Gastrocnemius medialis (tissue), 4 donors: ENCODE measurements at regions of chr20 and their contacts with region 1.

Region 1: GRCh38 chr20:57654363-57654997 is 34.3 kb upstream of the ZBP1 start:
- DNase-seq: no peak
- ATAC-seq: peak; percentile 59 to 82
- H3K4me3 ChIP-seq: no peak overlapping the region
- H3K27ac ChIP-seq: no peak overlapping the region
- H3K4me1 ChIP-seq: no peaks in the 10 kb centered on the region
- H3K27me3 ChIP-seq: no peaks in the 10 kb centered on the region
- CTCF ChIP-seq: peak; percentile 88 to 94 (median 91)
- POLR2A ChIP-seq: no peak

Region 2: GRCh38 chr20:57748601-57749130 is 94.2 kb after region 1 on chr20:
- in situ Hi-C with region 1: loop called in 1 of 4 experiments (anchors 10 kb)
- intact Hi-C with region 1: loop called (anchors 5 kb)
- DNase-seq: peak; percentile 43 to 69
- ATAC-seq: peak; percentile 62 to 76
- H3K4me3 ChIP-seq: peak overlapping the region; percentile 40 to 71 (median 52)
- H3K27ac ChIP-seq: peak overlapping the region; percentile 21 to 58 (median 48)
- H3K4me1 ChIP-seq: peaks cover 20 to 22% of the 10 kb centered on the region in 2 donors
- H3K27me3 ChIP-seq: no peaks in the 10 kb centered on the region
- CTCF ChIP-seq: peak in 1 of 5 experiments; percentile 11
- POLR2A ChIP-seq: no peak

Region 3: DNA sequence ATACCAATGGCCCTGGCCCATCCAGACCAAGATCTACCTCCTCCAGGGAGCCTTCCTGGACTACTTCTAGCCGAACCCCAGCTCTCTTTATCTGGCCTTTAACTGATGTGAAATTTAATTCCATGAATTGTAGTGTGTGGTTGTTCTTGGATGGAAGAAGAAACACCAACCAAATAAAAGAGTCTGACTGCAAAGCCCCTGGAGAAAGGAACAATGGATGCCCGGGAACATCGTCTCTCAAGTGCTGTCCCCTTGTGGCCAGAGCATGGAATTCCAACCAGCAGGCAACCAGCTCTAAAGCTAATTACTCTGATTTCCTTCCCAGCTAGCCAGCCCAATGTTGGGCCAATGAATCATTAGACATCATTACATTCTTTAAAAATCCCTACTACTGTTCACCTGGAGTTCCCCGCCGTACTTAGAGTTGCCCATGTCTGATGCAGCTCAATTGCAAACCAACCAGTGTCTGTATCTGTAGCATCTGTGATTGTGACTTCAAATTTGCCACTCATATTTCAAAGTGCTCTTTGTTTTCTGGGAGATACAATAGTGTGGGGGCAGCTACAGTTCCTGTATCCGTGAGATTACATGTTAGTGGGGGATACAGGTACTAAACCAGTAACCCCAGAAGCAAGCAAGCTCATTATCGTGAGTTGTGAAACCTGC is 432.8 kb after region 1 on chr20:
- in situ Hi-C with region 1: loop called in 1 of 4 experiments (anchors 10 kb)
- intact Hi-C with region 1: loop called (anchors 2 kb)
- DNase-seq: no peak
- ATAC-seq: no peak
- H3K4me3 ChIP-seq: no peak overlapping the region
- H3K27ac ChIP-seq: no peak overlapping the region
- H3K4me1 ChIP-seq: no peaks in the 10 kb centered on the region
- H3K27me3 ChIP-seq: no peaks in the 10 kb centered on the region
- CTCF ChIP-seq: peak; percentile 46 to 69 (median 60)
- POLR2A ChIP-seq: no peak

Region 4: GRCh38 chr20:58179432-58180099 is 525.1 kb after region 1 on chr20:
- in situ Hi-C with region 1: loop called in 2 of 4 experiments (anchors 5 to 10 kb)
- intact Hi-C with region 1: loop called (anchors 2 kb)
- DNase-seq: no peak
- ATAC-seq: peak; percentile 38 to 61
- H3K4me3 ChIP-seq: peak overlapping the region in 3 of 4 donors; percentile 10 to 46 (median 32)
- H3K27ac ChIP-seq: no peak overlapping the region
- H3K4me1 ChIP-seq: no peaks in the 10 kb centered on the region
- H3K27me3 ChIP-seq: peaks cover 0 to 7% (median 2%) of the 10 kb centered on the region in 3 donors
- CTCF ChIP-seq: peak; percentile 85 to 95 (median 91)
- POLR2A ChIP-seq: no peak

Region 5: GRCh38 chr20:58209652-58210397 is 555.3 kb after region 1 on chr20:
- in situ Hi-C with region 1: no loop called
- intact Hi-C with region 1: loop called (anchors 10 kb)
- DNase-seq: peak; percentile 46 to 58
- ATAC-seq: peak; percentile 47 to 80
- H3K4me3 ChIP-seq: no peak overlapping the region
- H3K27ac ChIP-seq: no peak overlapping the region
- H3K4me1 ChIP-seq: no peaks in the 10 kb centered on the region
- H3K27me3 ChIP-seq: peaks cover 0 to 7% (median 3%) of the 10 kb centered on the region in 3 donors
- CTCF ChIP-seq: peak; percentile 99 to 100 (median 100)
- POLR2A ChIP-seq: no peak